K562 (cell line): ENCODE measurements at regions of chr12 and their contacts with region 1.

Region 1: DNA sequence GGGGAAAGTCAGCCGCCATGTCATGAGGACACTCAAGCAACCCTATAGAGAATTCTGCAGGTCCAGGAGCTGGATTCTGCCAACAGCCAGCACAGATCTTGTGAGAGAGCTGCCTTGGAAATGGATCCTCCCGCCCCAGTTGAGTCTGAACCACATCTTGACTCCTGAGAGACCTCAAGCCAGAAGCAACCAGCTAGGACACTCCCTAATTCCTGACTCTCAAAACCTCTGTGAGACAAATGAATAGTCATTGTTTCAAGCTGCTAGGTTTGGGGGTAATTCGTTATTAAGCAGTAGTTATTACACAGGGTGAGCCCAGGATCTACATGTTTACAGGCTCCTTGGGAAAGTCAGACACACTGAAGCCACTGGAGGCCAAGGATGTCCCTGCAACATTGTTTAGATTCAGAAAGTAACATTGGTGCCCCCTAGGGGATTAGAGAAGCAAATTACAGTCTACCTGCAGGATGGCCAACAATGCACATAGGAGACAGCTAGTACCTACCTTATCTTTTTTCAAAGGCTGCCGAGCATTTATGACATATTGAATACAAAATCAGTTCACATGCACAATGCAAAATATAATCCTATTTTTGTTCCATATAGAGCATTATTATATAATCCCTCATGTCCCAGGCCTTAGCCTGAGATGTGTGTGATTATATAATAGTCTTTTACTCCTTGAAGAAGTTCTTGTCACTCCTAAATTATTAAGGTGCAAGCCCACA is 57.9 kb upstream of the FICD start:
- DNase-seq: peak; percentile 63 to 75 (median 70)
- ATAC-seq: peak; percentile 99
- H3K4me3 ChIP-seq: no peak overlapping the region
- H3K27ac ChIP-seq: no peak overlapping the region
- H3K4me1 ChIP-seq: no peaks in the 10 kb centered on the region; a peak in 1 of 5 replicates
- H3K27me3 ChIP-seq: peaks cover 5 to 6% of the 10 kb centered on the region in 2 experiments
- CTCF ChIP-seq: peak; percentile 74 to 92 (median 88)
- EP300 ChIP-seq: no peak
- POLR2A ChIP-seq: no peak
- RAD21 ChIP-seq: peak; percentile 70 to 81

Region 2: DNA sequence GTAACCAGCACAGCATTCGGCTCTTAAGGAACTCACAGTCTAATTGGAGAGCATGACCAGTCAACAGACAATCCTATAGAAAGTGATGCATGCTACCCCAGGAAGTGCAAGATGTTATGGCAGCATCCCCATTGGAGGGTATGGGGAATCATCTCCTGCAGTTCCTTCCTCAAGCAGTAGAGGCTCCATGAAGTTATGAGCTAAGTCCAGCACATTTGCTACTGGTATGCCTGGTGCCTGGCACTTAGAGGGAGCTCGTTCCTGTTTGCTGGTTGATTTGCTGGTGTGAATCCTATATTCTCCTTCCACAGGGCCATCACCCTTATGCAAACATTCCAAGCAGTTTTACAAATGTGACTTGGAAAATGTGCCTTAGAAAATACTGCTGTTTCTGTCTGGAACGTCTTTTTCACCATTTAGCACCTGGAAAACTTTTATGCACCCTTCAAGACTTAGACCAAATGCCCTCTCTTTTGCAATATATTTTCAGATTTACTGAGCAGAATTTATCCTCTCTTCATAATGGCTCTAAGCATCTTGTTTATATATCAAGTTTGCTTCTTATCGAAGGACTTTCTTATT is 464.2 kb before region 1 on chr12:
- CTCF ChIA-PET with region 1: no interaction called
- POLR2A ChIA-PET with region 1: no interaction called
- in situ Hi-C with region 1: no loop called
- intact Hi-C with region 1: loop called (anchors 5 kb)
- DNase-seq: peak; percentile 27 to 51 (median 38)
- ATAC-seq: peak; percentile 98
- H3K4me3 ChIP-seq: no peak overlapping the region
- H3K27ac ChIP-seq: no peak overlapping the region
- H3K4me1 ChIP-seq: no peaks in the 10 kb centered on the region
- H3K27me3 ChIP-seq: no peaks in the 10 kb centered on the region
- CTCF ChIP-seq: peak; percentile 53 to 82 (median 65)
- EP300 ChIP-seq: no peak
- POLR2A ChIP-seq: no peak
- RAD21 ChIP-seq: peak; percentile 15 to 48; a peak in 2 of 4 replicates

Region 3: GRCh38 chr12:108099073-108099472 is 358.1 kb before region 1 on chr12:
- CTCF ChIA-PET with region 1: no interaction called
- POLR2A ChIA-PET with region 1: no interaction called
- in situ Hi-C with region 1: no loop called
- intact Hi-C with region 1: loop called (anchors 1 kb)
- DNase-seq: peak in 2 of 4 experiments; percentile 27 to 58
- ATAC-seq: peak; percentile 78
- H3K4me3 ChIP-seq: no peak overlapping the region
- H3K27ac ChIP-seq: no peak overlapping the region
- H3K4me1 ChIP-seq: peaks cover 4 to 15% of the 10 kb centered on the region in 2 experiments; a peak in 4 of 5 replicates
- H3K27me3 ChIP-seq: peaks cover 3 to 6% of the 10 kb centered on the region in 2 experiments; a peak in 3 of 5 replicates
- CTCF ChIP-seq: peak; percentile 60 to 84 (median 62); a peak in 5 of 6 replicates
- EP300 ChIP-seq: no peak
- POLR2A ChIP-seq: no peak
- RAD21 ChIP-seq: peak; percentile 71 to 86

Region 4: DNA sequence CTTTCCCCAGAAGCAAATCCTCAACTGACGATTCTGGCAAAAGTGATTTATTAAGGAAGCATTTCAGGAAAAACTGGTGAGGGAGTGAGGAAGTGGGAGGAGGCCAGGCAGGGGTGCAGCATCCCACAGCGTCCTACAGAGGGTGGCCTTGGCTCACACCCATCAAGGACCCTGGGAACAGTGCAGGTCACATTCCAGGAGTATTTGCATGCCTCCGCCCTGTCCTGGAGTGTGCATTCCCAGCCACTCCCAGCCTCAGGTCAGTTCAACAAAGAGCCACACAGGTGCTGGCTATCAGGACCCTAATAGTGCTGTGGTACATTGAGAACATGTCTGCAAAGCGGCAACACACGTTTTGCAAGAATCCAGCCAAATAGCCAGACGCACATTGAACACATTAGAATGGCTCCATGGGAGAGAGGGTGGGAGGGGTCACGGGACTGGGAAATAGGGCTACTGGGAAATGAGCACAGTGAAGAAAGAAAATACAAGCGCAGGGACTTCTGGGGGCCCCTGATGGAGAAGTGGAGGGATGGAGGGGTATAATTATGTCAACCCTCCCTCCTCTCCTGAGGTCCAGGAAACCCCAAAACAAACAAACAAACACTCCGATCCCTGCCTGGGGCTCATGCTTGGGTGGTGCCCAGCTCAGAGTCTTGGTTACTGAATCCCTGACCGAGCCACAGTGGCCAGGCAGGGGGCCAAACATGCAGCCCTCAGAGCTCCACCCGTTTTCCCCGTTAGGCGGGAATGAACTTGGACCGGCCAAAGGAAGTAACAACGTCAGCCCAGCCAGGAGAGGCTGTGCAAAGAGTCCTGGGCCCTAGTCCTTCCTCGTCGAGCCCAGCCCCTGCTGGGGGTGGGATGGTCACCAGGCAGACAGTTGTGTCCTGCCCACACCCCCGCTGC is 154.5 kb before region 1 on chr12:
- CTCF ChIA-PET with region 1: no interaction called
- POLR2A ChIA-PET with region 1: interaction called, 3 read pairs
- in situ Hi-C with region 1: no loop called
- intact Hi-C with region 1: loop called (anchors 5 kb)
- DNase-seq: no peak
- ATAC-seq: peak; percentile 47; the same call in 1 of the 3 replicates
- H3K4me3 ChIP-seq: no peak overlapping the region
- H3K27ac ChIP-seq: no peak overlapping the region
- H3K4me1 ChIP-seq: peaks cover 0 to 12% of the 10 kb centered on the region in 2 experiments; a peak in 2 of 5 replicates
- H3K27me3 ChIP-seq: peaks cover 36 to 55% of the 10 kb centered on the region in 2 experiments
- CTCF ChIP-seq: peak; percentile 14 to 42 (median 35); a peak in 3 of 6 replicates
- EP300 ChIP-seq: no peak
- POLR2A ChIP-seq: no peak
- RAD21 ChIP-seq: no peak

Region 5: DNA sequence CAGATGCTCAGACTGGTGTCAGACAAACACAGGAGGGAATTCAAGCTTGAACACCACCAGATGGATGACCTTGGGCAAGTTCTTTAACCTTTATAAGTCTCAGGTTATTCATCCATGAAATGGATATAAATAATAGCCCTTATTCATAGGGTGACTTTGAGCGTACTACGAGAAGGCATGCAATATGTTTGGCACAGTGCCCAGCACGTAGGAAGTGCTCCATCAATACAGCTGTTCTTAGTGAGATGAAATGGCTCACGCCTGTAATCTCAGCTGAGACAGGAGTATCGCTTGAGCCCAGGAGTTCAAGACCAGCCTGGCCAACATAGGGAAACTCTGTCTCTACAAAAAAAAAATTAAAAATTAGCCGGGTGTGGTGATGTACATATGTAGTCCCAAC is 26.9 kb before region 1 on chr12:
- CTCF ChIA-PET with region 1: no interaction called
- POLR2A ChIA-PET with region 1: no interaction called
- in situ Hi-C with region 1: no loop called
- intact Hi-C with region 1: no loop called
- DNase-seq: no peak
- ATAC-seq: no peak
- H3K4me3 ChIP-seq: no peak overlapping the region
- H3K27ac ChIP-seq: no peak overlapping the region
- H3K4me1 ChIP-seq: no peaks in the 10 kb centered on the region
- H3K27me3 ChIP-seq: peaks cover 18 to 50% of the 10 kb centered on the region in 2 experiments; a peak in 3 of 5 replicates
- CTCF ChIP-seq: no peak
- EP300 ChIP-seq: no peak
- POLR2A ChIP-seq: no peak
- RAD21 ChIP-seq: no peak

Region 6: DNA sequence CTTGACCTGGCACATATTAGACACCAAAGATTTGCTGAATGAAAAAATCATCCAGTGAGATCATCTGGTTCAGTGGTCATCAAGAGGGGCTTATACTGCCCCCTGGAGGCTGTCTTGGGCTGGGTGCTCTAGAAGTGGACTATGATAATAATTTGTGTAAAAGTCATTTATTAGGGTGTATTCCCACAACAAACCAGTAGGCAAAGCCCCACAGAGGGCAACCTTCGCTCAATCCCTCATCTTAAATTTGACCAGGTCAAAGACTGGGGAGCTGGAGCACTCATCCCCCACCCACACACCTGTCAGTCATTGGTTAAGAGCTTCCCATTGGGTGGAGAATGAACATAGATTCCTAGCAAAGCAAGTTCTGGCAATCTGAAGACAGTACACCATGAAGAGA is 37.9 kb after region 1 on chr12:
- CTCF ChIA-PET with region 1: interaction called, 3 read pairs
- POLR2A ChIA-PET with region 1: no interaction called
- in situ Hi-C with region 1: no loop called
- intact Hi-C with region 1: loop called (anchors 2 kb)
- DNase-seq: peak; percentile 76 to 79 (median 78)
- ATAC-seq: peak; percentile 94
- H3K4me3 ChIP-seq: no peak overlapping the region
- H3K27ac ChIP-seq: no peak overlapping the region
- H3K4me1 ChIP-seq: no peaks in the 10 kb centered on the region; a peak in 1 of 5 replicates
- H3K27me3 ChIP-seq: peaks cover 16 to 31% of the 10 kb centered on the region in 2 experiments
- CTCF ChIP-seq: peak; percentile 84 to 93 (median 84)
- EP300 ChIP-seq: no peak
- POLR2A ChIP-seq: no peak
- RAD21 ChIP-seq: peak; percentile 73 to 90

Region 7: GRCh38 chr12:108633534-108634248 is 176.5 kb after region 1 on chr12 and contains the start of gene SELPLG:
- CTCF ChIA-PET with region 1: no interaction called
- POLR2A ChIA-PET with region 1: no interaction called
- in situ Hi-C with region 1: no loop called
- intact Hi-C with region 1: no loop called
- DNase-seq: peak in 3 of 4 experiments; percentile 40 to 50 (median 45)
- ATAC-seq: no peak
- H3K4me3 ChIP-seq: no peak within 1 kb of the TSS
- H3K27ac ChIP-seq: peak within 1 kb of the TSS; percentile 76
- H3K4me1 ChIP-seq: peaks cover 55 to 57% of the 10 kb centered on the region in 2 experiments
- H3K27me3 ChIP-seq: no peaks in the 10 kb centered on the region
- CTCF ChIP-seq: no peak
- EP300 ChIP-seq: no peak
- POLR2A ChIP-seq: no peak
- RAD21 ChIP-seq: no peak
- polyA plus RNA-seq, gene SELPLG: 0.22 to 0.34 TPM